MCF 10A (cell line): ENCODE measurements at regions of chrX and their contacts with region 1.

Region 1: GRCh38 chrX:132270699-132271098 is 51.5 kb upstream of the RAP2C start:
- DNase-seq: peak; percentile 89
- H3K4me3 Mint-ChIP-seq: peak overlapping the region; percentile 2
- H3K27ac Mint-ChIP-seq: peak overlapping the region; percentile 74
- H3K4me1 Mint-ChIP-seq: peaks cover 21% of the 10 kb centered on the region
- H3K27me3 Mint-ChIP-seq: peaks cover 51% of the 10 kb centered on the region
- CTCF ChIP-seq: no peak

Region 2: DNA sequence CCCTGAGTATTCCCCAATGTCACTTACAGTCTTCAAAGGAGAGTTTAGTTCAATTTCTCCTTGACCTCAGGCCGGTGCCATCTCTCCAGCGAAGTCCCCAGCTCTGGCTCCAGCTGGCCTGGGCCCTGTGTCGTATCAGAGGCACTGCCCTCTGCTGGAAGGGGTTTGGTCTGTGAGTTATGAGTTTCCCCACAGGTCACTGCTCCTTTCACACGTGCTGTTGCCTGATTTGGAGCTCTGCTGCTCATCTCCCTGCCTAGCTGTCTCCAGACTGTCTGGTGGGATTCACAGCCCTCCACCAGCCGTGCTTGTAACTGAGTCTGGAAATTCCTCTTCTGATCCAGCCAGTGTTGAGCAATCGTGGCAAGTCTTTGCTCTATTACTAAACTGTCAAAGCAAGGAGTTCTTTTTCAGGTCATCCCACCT is 51.3 kb before region 1 on chrX and contains the start of gene RAP2C:
- CTCF ChIA-PET with region 1: interaction called, 5 read pairs
- POLR2A ChIA-PET with region 1: interaction called, 19 read pairs
- intact Hi-C with region 1: no loop called
- DNase-seq: peak; percentile 78
- H3K4me3 Mint-ChIP-seq: peak within 1 kb of the TSS; percentile 80
- H3K27ac Mint-ChIP-seq: peak within 1 kb of the TSS; percentile 72
- H3K4me1 Mint-ChIP-seq: peaks cover 7% of the 10 kb centered on the region
- H3K27me3 Mint-ChIP-seq: peaks cover 66% of the 10 kb centered on the region
- CTCF ChIP-seq: peak; percentile 48
- total RNA-seq, gene RAP2C: 36.3 and 37.0 TPM in 2 replicates

Region 3: GRCh38 chrX:132231587-132231986 is 39.1 kb before region 1 on chrX:
- CTCF ChIA-PET with region 1: interaction called, 6 read pairs
- POLR2A ChIA-PET with region 1: interaction called, 12 read pairs
- intact Hi-C with region 1: loop called (anchors 2 kb)
- DNase-seq: no peak
- H3K4me3 Mint-ChIP-seq: no peak overlapping the region
- H3K27ac Mint-ChIP-seq: no peak overlapping the region
- H3K4me1 Mint-ChIP-seq: peaks cover 10% of the 10 kb centered on the region
- H3K27me3 Mint-ChIP-seq: peaks cover 77% of the 10 kb centered on the region
- CTCF ChIP-seq: no peak

Region 4: GRCh38 chrX:132488819-132489577 is 218.3 kb after region 1 on chrX and contains the start of gene MBNL3:
- CTCF ChIA-PET with region 1: no interaction called
- POLR2A ChIA-PET with region 1: interaction called, 26 read pairs
- intact Hi-C with region 1: loop called (anchors 5 kb)
- DNase-seq: peak; percentile 76
- H3K4me3 Mint-ChIP-seq: peak within 1 kb of the TSS; percentile 83
- H3K27ac Mint-ChIP-seq: peak within 1 kb of the TSS; percentile 79
- H3K4me1 Mint-ChIP-seq: peaks cover 13% of the 10 kb centered on the region
- H3K27me3 Mint-ChIP-seq: peaks cover 31% of the 10 kb centered on the region
- CTCF ChIP-seq: no peak
- total RNA-seq, gene MBNL3: 14.0 and 17.7 TPM in 2 replicates